Endothelial cell of umbilical vein (primary cell): ENCODE measurements at regions of chr2 and their contacts with region 1.

Region 1: DNA sequence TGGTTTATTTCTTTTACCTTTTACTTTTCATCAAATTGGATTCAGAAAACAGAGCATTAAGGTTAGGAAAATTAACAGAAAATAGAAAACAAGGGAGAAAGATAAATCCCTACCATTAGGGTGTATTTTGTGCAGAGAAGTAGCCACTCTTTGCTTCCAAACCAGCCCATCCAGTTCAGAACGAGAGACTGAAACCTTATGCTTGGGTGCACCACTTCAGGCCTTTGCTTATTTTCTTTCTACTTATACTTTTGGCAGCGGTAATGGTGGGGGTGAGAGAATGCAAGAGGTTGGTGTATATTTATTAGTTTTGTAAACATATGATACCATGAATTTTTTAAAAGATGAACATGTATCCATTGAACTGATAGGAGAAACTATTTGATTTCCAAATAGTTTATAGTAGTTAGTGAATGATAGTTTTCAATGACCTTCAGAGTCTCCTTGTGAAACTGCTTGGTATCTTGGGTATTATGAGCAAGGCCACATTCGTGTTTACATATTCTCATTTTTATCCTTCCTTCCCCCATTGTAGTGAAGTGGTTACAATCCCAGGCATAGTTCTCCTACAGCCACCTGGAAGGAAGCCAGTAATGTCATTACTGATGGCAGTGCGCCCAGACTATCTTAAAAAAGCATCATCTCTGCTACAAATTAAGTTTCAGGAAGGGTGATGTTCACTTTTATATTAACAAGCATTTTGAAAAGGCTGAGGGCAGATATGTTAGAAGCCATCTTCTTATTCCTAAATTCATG is 60.8 kb downstream of the MFSD6 start:
- DNase-seq: peak; percentile 98
- H3K4me3 ChIP-seq: no peak overlapping the region
- H3K27ac ChIP-seq: peak overlapping the region; percentile 75
- H3K4me1 ChIP-seq: peaks cover 9% of the 10 kb centered on the region
- H3K27me3 ChIP-seq: no peaks in the 10 kb centered on the region
- CTCF ChIP-seq: no peak
- POLR2A ChIP-seq: no peak

Region 2: GRCh38 chr2:190408538-190409271 is 60.3 kb before region 1 on chr2:
- CTCF ChIA-PET with region 1: no interaction called
- POLR2A ChIA-PET with region 1: no interaction called
- dilution Hi-C with region 1: no loop called
- intact Hi-C with region 1: loop called (anchors 1 kb)
- DNase-seq: peak; percentile 24
- H3K4me3 ChIP-seq: peak overlapping the region; percentile 14 to 62 (median 55)
- H3K27ac ChIP-seq: no peak overlapping the region
- H3K4me1 ChIP-seq: peaks cover 11% of the 10 kb centered on the region
- H3K27me3 ChIP-seq: peaks cover 17 to 25% of the 10 kb centered on the region in 2 experiments
- CTCF ChIP-seq: no peak
- POLR2A ChIP-seq: no peak

Region 3: GRCh38 chr2:190451561-190452176 is 17.3 kb before region 1 on chr2:
- CTCF ChIA-PET with region 1: interaction called, 3 read pairs
- POLR2A ChIA-PET with region 1: interaction called, 5 read pairs
- dilution Hi-C with region 1: no loop called
- intact Hi-C with region 1: loop called (anchors 2 kb)
- DNase-seq: no peak
- H3K4me3 ChIP-seq: no peak overlapping the region
- H3K27ac ChIP-seq: no peak overlapping the region
- H3K4me1 ChIP-seq: no peaks in the 10 kb centered on the region
- H3K27me3 ChIP-seq: no peaks in the 10 kb centered on the region
- CTCF ChIP-seq: no peak
- POLR2A ChIP-seq: no peak

Region 4: GRCh38 chr2:190482451-190482850 is 13.5 kb after region 1 on chr2:
- CTCF ChIA-PET with region 1: interaction called, 15 read pairs
- POLR2A ChIA-PET with region 1: no interaction called
- dilution Hi-C with region 1: no loop called
- intact Hi-C with region 1: no loop called
- DNase-seq: no peak
- H3K4me3 ChIP-seq: no peak overlapping the region
- H3K27ac ChIP-seq: no peak overlapping the region
- H3K4me1 ChIP-seq: no peaks in the 10 kb centered on the region
- H3K27me3 ChIP-seq: no peaks in the 10 kb centered on the region
- CTCF ChIP-seq: no peak
- POLR2A ChIP-seq: no peak